Activated CD4-positive, alpha-beta memory T cell treated with anti-CD3 and anti-CD28 coated beads for 36 hours (primary cell): ENCODE measurements at regions of chrX and their contacts with region 1.

Region 1: GRCh38 chrX:153971450-153972367 is at the start of gene HCFC1:
- DNase-seq: peak; percentile 92
- H3K4me3 Mint-ChIP-seq: peak within 1 kb of the TSS; percentile 100
- H3K27ac Mint-ChIP-seq: peak within 1 kb of the TSS; percentile 100
- H3K4me1 Mint-ChIP-seq: peaks cover 30% of the 10 kb centered on the region
- H3K27me3 Mint-ChIP-seq: no peaks in the 10 kb centered on the region
- total RNA-seq, gene HCFC1: 90.4 to 93.0 TPM

Region 2: GRCh38 chrX:153927922-153928760 is 43.6 kb before region 1 on chrX:
- CTCF ChIA-PET with region 1: interaction called, 11 read pairs
- POLR2A ChIA-PET with region 1: interaction called, 68 read pairs
- intact Hi-C with region 1: loop called (anchors 1 kb)
- DNase-seq: peak; percentile 96
- H3K4me3 Mint-ChIP-seq: peak overlapping the region; percentile 86
- H3K27ac Mint-ChIP-seq: peak overlapping the region; percentile 98
- H3K4me1 Mint-ChIP-seq: peaks cover 35% of the 10 kb centered on the region
- H3K27me3 Mint-ChIP-seq: no peaks in the 10 kb centered on the region

Region 3: DNA sequence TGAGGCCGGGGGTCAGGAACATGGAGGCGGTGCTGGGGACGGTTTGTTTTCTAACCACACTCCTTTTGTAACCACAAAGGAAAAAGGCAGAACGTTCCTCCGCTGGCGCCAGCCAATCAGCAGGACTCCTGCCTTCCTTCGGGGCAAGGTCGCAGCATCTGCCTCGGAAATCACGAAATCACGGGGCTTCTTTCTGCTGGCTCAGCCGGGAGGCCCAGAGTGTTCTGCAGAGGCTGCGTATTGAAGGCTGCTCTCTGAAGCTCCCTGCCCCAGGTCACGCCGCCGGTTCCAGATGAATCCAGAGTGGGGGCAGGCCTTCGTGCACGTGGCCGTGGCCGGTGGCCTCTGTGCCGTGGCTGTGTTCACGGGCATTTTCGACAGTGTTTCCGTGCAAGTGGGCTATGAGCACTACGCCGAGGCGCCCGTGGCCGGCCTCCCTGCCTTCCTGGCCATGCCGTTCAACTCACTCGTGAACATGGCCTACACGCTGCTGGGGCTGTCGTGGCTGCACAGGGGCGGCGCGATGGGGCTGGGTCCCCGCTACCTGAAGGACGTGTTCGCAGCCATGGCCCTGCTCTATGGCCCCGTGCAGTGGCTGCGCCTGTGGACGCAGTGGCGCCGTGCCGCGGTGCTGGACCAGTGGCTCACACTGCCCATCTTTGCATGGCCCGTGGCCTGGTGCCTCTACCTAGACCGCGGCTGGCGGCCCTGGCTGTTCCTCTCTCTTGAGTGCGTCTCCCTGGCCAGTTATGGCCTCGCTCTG is 10.2 kb after region 1 on chrX:
- CTCF ChIA-PET with region 1: interaction called, 4 read pairs
- POLR2A ChIA-PET with region 1: interaction called, 40 read pairs
- intact Hi-C with region 1: loop called (anchors 1 kb)
- DNase-seq: peak; percentile 86
- H3K4me3 Mint-ChIP-seq: peak overlapping the region; percentile 62
- H3K27ac Mint-ChIP-seq: peak overlapping the region; percentile 94
- H3K4me1 Mint-ChIP-seq: peaks cover 46% of the 10 kb centered on the region
- H3K27me3 Mint-ChIP-seq: no peaks in the 10 kb centered on the region

Region 4: GRCh38 chrX:154019633-154020528 is 48.2 kb after region 1 on chrX and contains the start of gene IRAK1:
- CTCF ChIA-PET with region 1: interaction called, 3 read pairs
- POLR2A ChIA-PET with region 1: interaction called, 4 read pairs
- intact Hi-C with region 1: loop called (anchors 5 kb)
- DNase-seq: peak; percentile 65
- H3K4me3 Mint-ChIP-seq: peak within 1 kb of the TSS; percentile 89
- H3K27ac Mint-ChIP-seq: peak within 1 kb of the TSS; percentile 94
- H3K4me1 Mint-ChIP-seq: peaks cover 20% of the 10 kb centered on the region
- H3K27me3 Mint-ChIP-seq: no peaks in the 10 kb centered on the region
- total RNA-seq, gene IRAK1: 99.6 to 106 TPM

Region 5: DNA sequence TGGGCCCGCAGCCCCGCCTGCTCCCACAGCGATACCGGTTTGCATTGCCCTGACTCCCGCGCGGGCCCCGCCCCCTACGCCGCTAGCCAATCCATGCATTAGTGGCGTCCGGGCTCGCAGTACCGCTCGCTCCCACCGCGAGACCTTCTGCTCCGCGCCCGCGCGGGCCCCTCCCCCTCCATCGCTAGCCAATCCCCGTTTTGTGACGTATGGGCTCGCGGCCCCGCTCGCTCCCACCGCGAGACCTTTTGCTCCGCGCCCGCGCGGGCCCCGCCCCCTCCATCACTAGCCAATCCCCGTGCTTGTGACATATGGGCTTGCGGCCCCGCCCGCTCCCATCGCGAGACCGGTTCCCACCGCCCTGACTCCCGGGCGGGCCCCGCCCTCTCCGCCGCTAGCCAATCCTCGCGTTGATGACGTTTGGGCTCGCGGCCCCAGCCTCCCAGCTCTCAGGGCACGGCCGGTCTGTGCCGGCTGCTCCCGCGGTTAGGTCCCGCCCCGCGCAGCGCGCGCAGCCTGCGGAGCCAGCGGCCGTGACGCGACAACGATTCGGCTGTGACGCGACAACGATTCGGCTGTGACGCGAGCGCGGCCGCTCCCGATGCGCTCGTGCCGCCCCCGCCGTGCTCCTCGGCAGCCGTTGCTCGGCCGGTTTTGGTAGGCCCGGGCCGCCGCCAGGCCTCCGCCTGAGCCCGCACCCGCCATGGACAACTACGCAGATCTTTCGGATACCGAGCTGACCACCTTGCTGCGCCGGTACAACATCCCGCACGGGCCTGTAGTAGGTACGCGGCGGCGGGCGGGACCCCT is 407.3 kb after region 1 on chrX and contains the start of gene EMD:
- CTCF ChIA-PET with region 1: no interaction called
- POLR2A ChIA-PET with region 1: no interaction called
- intact Hi-C with region 1: loop called (anchors 10 kb)
- DNase-seq: peak; percentile 97
- H3K4me3 Mint-ChIP-seq: peak within 1 kb of the TSS; percentile 83
- H3K27ac Mint-ChIP-seq: peak within 1 kb of the TSS; percentile 87
- H3K4me1 Mint-ChIP-seq: peaks cover 24% of the 10 kb centered on the region
- H3K27me3 Mint-ChIP-seq: no peaks in the 10 kb centered on the region
- total RNA-seq, gene EMD: 75.8 to 79.1 TPM